Heart right ventricle (tissue), 16 donors: ENCODE measurements at regions of chr7 and their contacts with region 1.

Region 1: DNA sequence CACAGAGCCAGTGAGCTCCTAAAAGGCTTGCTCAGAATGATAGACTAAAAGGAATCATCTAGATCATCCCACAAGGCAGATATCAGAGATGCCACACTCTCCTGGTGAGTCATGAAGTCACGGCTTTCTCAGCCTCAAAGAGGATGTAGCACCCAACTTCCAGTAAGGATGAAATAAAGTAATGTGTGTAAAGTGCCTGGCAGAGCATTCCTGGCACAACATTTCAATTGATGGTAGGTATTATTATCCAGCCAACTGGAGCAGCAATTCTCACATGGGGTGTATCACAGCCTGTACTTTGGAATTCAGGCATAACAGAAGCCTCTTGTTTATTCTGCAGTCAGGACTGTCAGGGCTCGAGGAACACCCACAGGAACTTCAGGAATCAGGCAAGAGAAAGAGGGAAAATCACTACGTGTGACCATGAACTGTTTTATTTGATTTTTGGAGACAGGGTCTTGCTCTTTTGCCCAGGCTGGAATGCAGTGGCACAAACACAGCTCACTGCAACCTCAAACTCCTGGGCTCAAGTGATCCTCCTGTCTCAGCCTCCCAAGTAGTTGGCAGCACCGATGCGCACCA is 5.3 kb upstream of the NAT16 start:
- DNase-seq: no peak
- ATAC-seq: no peak
- H3K4me3 ChIP-seq: no peak overlapping the region
- H3K27ac ChIP-seq: no peak overlapping the region
- H3K4me1 ChIP-seq: no peaks in the 10 kb centered on the region
- H3K27me3 ChIP-seq: peaks cover 5 to 81% (median 50%) of the 10 kb centered on the region in 7 donors
- CTCF ChIP-seq: no peak

Region 2: DNA sequence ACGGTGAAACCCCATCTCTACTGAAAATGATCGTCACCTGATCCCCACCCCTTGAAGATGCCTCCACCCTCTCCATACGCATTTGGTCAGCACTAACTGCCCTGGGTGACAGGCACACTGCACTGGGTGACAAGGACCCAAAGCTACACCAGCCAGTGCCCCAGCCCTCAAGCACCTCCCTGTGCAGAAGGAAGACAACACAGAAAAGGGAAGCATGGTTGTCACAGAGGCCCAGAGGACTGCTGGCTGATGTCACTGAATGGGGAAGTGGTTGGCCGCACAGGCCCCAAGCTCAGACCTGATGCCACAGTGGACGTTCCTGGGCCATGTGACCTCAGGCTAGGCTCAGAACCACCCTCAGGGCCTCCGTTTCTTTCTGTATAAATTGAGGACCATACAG is 816.2 kb before region 1 on chr7:
- intact Hi-C with region 1: no loop called
- DNase-seq: peak; percentile 37 to 58
- ATAC-seq: peak; percentile 36 to 75 (median 62)
- H3K4me3 ChIP-seq: no peak overlapping the region
- H3K27ac ChIP-seq: peak overlapping the region in 6 of 10 donors; percentile 30 to 95 (median 60)
- H3K4me1 ChIP-seq: peaks cover 0 to 86% (median 0%) of the 10 kb centered on the region in 9 donors
- H3K27me3 ChIP-seq: no peaks in the 10 kb centered on the region
- CTCF ChIP-seq: no peak

Region 3: DNA sequence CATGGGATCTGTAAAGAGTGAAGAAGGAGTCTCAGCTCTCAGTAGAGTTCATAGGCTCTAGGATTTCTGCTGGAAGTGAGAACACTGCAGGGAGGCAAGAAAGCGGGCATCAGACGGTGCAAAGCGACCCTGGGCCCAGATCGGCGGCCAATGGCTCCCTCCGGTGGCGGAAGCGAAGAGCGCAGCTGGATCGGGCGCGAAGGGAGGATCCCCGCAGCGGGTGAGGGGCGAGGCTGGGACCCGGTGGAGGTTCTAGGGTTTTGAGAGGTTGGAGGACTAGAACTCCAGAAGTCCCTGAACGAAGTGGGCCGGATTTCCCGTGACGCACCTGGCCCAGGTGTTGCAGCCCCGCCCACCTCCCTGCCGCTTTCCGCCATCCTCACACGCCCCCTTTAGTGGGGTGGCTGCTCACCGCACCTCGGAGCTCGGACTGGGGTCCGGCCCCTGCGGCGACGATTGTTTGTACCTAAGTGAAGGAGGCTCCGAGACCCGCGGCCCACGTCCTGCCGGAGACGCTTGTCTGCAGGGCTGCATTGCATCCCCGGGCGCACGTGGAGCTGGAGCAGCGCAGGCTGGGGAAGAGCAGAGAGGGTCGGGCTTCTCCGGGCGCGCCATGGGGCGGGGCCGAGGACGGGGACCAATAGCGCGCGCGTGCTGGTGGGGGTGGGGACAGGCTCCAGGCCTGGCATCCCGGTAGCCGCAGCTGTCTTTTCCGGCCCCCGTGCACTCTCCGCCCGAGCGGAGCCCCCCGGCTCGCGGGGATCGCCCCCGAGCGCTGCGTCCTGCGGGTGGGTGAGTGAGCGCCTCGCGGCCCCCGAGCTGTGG is 333.1 kb before region 1 on chr7 and contains the start of gene SLC12A9:
- intact Hi-C with region 1: no loop called
- DNase-seq: peak; percentile 90 to 92
- ATAC-seq: peak; percentile 99 to 100 (median 99)
- H3K4me3 ChIP-seq: peak within 1 kb of the TSS; percentile 52 to 91 (median 72)
- H3K27ac ChIP-seq: peak within 1 kb of the TSS in 9 of 10 donors; percentile 54 to 90 (median 70)
- H3K4me1 ChIP-seq: peaks cover 8 to 21% (median 16%) of the 10 kb centered on the region in 9 donors
- H3K27me3 ChIP-seq: no peaks in the 10 kb centered on the region
- CTCF ChIP-seq: peak; percentile 76 to 99 (median 95)
- total RNA-seq, gene SLC12A9: 4.8 to 15.7 (median 6.9) TPM

Region 4: GRCh38 chr7:101066141-101066832 is 119.1 kb before region 1 on chr7:
- intact Hi-C with region 1: no loop called
- DNase-seq: peak; percentile 30 to 44
- ATAC-seq: peak in 6 of 8 donors; percentile 25 to 80 (median 67)
- H3K4me3 ChIP-seq: no peak overlapping the region
- H3K27ac ChIP-seq: peak overlapping the region in 1 of 10 donors; percentile 4
- H3K4me1 ChIP-seq: no peaks in the 10 kb centered on the region
- H3K27me3 ChIP-seq: peaks cover 0 to 73% (median 45%) of the 10 kb centered on the region in 7 donors
- CTCF ChIP-seq: no peak

Region 5: GRCh38 chr7:101153969-101154692 is 31.2 kb before region 1 on chr7 and contains the start of gene AP1S1:
- intact Hi-C with region 1: loop called in 2 of 10 experiments (anchors 5 kb)
- DNase-seq: peak; percentile 94 to 96
- ATAC-seq: peak; percentile 95 to 98 (median 97)
- H3K4me3 ChIP-seq: peak within 1 kb of the TSS; percentile 63 to 99 (median 84)
- H3K27ac ChIP-seq: peak within 1 kb of the TSS in 6 of 10 donors; percentile 22 to 77 (median 40)
- H3K4me1 ChIP-seq: peaks cover 3 to 20% (median 10%) of the 10 kb centered on the region in 9 donors
- H3K27me3 ChIP-seq: peaks cover 0 to 10% (median 3%) of the 10 kb centered on the region in 7 donors
- CTCF ChIP-seq: no peak
- total RNA-seq, gene AP1S1: 7.8 to 15.2 (median 11.2) TPM

Region 6: GRCh38 chr7:101538596-101539459 is 353.5 kb after region 1 on chr7:
- intact Hi-C with region 1: no loop called
- DNase-seq: peak; percentile 33 to 62
- ATAC-seq: peak; percentile 39 to 73 (median 60)
- H3K4me3 ChIP-seq: no peak overlapping the region
- H3K27ac ChIP-seq: no peak overlapping the region
- H3K4me1 ChIP-seq: peaks cover 0 to 24% (median 6%) of the 10 kb centered on the region in 9 donors
- H3K27me3 ChIP-seq: peaks cover 0 to 9% (median 0%) of the 10 kb centered on the region in 7 donors
- CTCF ChIP-seq: peak; percentile 63 to 94 (median 82)